GM12878 (cell line): ENCODE measurements at regions of chr3 and their contacts with region 1.

Region 1: GRCh38 chr3:197782230-197782629 is 8.8 kb upstream of the LRCH3 start:
- DNase-seq: peak; percentile 50
- ATAC-seq: peak; percentile 89
- H3K4me3 ChIP-seq: no peak overlapping the region
- H3K27ac ChIP-seq: peak overlapping the region; percentile 81
- H3K4me1 ChIP-seq: peaks cover 25% of the 10 kb centered on the region
- H3K27me3 ChIP-seq: no peaks in the 10 kb centered on the region
- CTCF ChIP-seq: no peak
- EP300 ChIP-seq: no peak
- POLR2A ChIP-seq: no peak
- RAD21 ChIP-seq: no peak

Region 2: GRCh38 chr3:197749601-197750395 is 32.4 kb before region 1 on chr3 and contains the start of gene FYTTD1:
- CTCF ChIA-PET with region 1: interaction called, 6 read pairs
- POLR2A ChIA-PET with region 1: interaction called, 6 read pairs
- RAD21 ChIA-PET with region 1: interaction called, 9 read pairs
- SMC1A ChIA-PET with region 1: interaction called, 10 read pairs
- in situ Hi-C with region 1: no loop called
- intact Hi-C with region 1: no loop called
- DNase-seq: no peak
- ATAC-seq: peak; percentile 87
- H3K4me3 ChIP-seq: peak within 1 kb of the TSS; percentile 82
- H3K27ac ChIP-seq: peak within 1 kb of the TSS; percentile 84
- H3K4me1 ChIP-seq: peaks cover 19% of the 10 kb centered on the region
- H3K27me3 ChIP-seq: no peaks in the 10 kb centered on the region
- CTCF ChIP-seq: peak; percentile 47 to 63 (median 50); a peak in 5 of 6 replicates
- EP300 ChIP-seq: 0 out of 4 replicates have a peak, but pooled peaks of 1 of the 2 experiments have one; percentile 9
- POLR2A ChIP-seq: peak; percentile 75
- RAD21 ChIP-seq: peak; percentile 49
- polyA plus RNA-seq, gene FYTTD1: 25.5 to 35.5 TPM

Region 3: DNA sequence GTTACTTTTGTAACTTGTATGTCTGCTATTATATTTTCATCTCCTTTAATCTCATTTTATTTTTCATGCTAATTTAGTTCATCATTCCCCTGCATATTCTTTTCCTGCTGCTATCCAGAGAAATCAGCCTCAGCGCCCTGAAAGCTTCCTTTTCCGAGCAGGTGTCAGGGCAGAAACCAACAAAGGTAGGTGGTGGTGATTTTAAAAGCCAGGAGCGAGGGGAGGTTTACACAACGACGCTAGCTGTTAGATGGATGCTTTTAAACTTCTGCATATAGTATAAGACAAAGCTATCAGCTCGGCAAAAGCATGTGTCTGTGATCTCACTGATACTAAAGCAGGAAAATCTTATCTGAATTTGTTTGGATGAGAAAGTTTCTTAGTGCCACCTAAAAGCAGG is 83.8 kb after region 1 on chr3:
- CTCF ChIA-PET with region 1: no interaction called
- POLR2A ChIA-PET with region 1: no interaction called
- RAD21 ChIA-PET with region 1: no interaction called
- SMC1A ChIA-PET with region 1: no interaction called
- in situ Hi-C with region 1: no loop called
- intact Hi-C with region 1: no loop called
- DNase-seq: no peak
- ATAC-seq: no peak
- H3K4me3 ChIP-seq: no peak overlapping the region
- H3K27ac ChIP-seq: no peak overlapping the region
- H3K4me1 ChIP-seq: no peaks in the 10 kb centered on the region; the same call in 1 of the 2 replicates
- H3K27me3 ChIP-seq: no peaks in the 10 kb centered on the region
- CTCF ChIP-seq: no peak
- EP300 ChIP-seq: no peak
- POLR2A ChIP-seq: no peak
- RAD21 ChIP-seq: no peak

Region 4: DNA sequence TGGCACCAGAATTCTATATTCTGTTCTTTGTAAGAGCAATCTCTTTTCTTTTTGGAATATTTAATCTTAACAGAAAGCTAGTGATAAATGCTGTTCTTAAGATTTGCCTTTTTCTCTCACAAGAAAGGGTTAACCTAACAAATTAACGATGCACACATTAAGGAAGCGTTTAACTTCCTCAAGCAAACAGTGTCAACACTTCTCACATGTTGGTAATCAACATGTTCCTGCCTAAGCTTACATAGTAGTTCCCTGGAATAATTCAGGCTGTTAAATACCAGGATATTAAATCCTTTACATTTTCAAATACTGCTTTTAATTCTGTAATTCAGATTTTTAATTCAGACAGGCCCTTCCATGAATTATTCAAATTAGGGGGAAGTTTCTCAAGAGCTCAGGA is 100.4 kb after region 1 on chr3:
- CTCF ChIA-PET with region 1: no interaction called
- POLR2A ChIA-PET with region 1: no interaction called
- RAD21 ChIA-PET with region 1: no interaction called
- SMC1A ChIA-PET with region 1: no interaction called
- in situ Hi-C with region 1: no loop called
- intact Hi-C with region 1: no loop called
- DNase-seq: no peak
- ATAC-seq: no peak
- H3K4me3 ChIP-seq: no peak overlapping the region
- H3K27ac ChIP-seq: no peak overlapping the region
- H3K4me1 ChIP-seq: no peaks in the 10 kb centered on the region
- H3K27me3 ChIP-seq: no peaks in the 10 kb centered on the region
- CTCF ChIP-seq: no peak
- EP300 ChIP-seq: no peak
- POLR2A ChIP-seq: no peak
- RAD21 ChIP-seq: no peak